K562 (cell line): ENCODE measurements at regions of chr17 and their contacts with region 1.

Region 1: DNA sequence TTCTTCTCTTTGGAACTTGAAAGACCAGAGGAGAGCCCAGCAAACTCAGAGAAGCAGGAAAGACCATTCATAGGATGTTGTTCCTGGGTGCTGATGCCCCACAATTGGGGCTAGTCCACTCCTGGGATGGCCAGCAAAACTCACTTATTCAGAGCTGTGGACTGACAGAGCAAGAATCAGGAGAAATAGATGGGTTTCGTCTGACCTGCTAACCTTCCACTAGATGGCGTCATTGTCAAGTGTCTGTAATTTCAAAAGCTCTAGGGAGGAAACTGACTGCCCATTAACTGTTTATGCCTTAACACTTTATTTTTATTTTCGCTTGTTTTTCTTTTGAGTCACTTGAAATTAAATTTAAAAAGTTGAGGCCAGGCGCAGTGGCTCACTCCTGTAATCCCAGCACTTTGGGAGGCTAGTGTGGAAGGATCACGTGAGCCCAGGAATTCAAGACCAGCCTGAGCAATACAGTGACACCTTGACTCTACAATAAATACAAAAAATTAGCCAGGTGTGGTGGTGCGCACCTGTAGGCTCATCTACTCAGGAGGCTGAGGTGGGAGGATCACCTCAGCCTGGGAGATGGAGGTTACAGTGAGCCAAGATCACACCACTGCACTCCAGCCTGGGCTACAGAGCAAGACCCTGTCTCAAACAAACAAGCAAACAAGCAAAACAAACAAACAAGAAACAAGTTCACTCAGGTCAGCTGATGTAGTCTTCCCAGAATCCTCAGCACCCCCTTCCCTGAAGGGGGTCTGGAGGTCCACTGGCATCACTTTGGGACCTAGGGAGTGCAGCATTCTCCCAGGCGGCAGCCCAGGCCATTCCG is 28.6 kb upstream of the MILR1 start:
- DNase-seq: peak; percentile 59 to 83 (median 66)
- ATAC-seq: peak; percentile 92
- H3K4me3 ChIP-seq: no peak overlapping the region
- H3K27ac ChIP-seq: no peak overlapping the region
- H3K4me1 ChIP-seq: peaks cover 0 to 9% of the 10 kb centered on the region in 2 experiments; a peak in 1 of 5 replicates
- H3K27me3 ChIP-seq: no peaks in the 10 kb centered on the region
- CTCF ChIP-seq: peak; percentile 75 to 90 (median 79)
- EP300 ChIP-seq: no peak
- POLR2A ChIP-seq: no peak
- RAD21 ChIP-seq: peak; percentile 94 to 95

Region 2: GRCh38 chr17:63904316-63904715 is 516.0 kb before region 1 on chr17:
- CTCF ChIA-PET with region 1: no interaction called
- POLR2A ChIA-PET with region 1: no interaction called
- in situ Hi-C with region 1: no loop called
- intact Hi-C with region 1: loop called (anchors 10 kb)
- DNase-seq: no peak
- ATAC-seq: no peak
- H3K4me3 ChIP-seq: no peak overlapping the region
- H3K27ac ChIP-seq: no peak overlapping the region
- H3K4me1 ChIP-seq: no peaks in the 10 kb centered on the region; a peak in 1 of 5 replicates
- H3K27me3 ChIP-seq: peaks cover 0 to 17% of the 10 kb centered on the region in 2 experiments; a peak in 4 of 5 replicates
- CTCF ChIP-seq: no peak
- EP300 ChIP-seq: no peak
- POLR2A ChIP-seq: no peak
- RAD21 ChIP-seq: no peak

Region 3: DNA sequence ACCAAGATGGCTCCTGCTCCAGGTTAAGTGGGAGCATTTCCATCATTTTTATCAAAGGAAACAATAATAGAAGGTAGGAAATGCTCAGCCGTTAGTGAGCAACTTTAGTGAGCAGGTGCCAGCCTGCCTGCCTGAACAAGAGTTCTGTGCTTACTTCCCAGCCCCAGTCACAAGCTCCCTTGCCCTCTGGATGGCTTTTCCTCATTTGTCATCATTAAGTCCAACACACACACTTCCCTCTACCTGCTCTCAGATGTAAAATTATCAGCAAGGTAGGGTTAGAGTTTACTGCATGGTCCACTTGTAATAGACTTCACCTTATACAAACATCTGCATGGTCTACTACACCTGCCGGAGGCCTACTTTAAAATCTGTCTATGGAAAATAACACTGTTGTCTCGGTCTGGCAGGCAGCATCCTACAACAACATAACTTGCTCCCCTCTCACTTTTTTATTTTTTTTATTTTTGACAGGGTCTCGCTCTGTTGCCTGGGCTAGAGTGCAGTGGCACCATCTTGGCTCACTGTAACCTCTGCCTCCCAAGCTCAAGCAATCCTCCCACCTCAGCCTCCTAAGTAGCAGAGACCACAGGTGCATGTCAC is 170.0 kb before region 1 on chr17:
- CTCF ChIA-PET with region 1: no interaction called
- POLR2A ChIA-PET with region 1: no interaction called
- in situ Hi-C with region 1: no loop called
- intact Hi-C with region 1: no loop called
- DNase-seq: no peak
- ATAC-seq: no peak
- H3K4me3 ChIP-seq: no peak overlapping the region
- H3K27ac ChIP-seq: no peak overlapping the region
- H3K4me1 ChIP-seq: peaks cover 3 to 5% of the 10 kb centered on the region in 2 experiments; a peak in 4 of 5 replicates
- H3K27me3 ChIP-seq: no peaks in the 10 kb centered on the region
- CTCF ChIP-seq: no peak
- EP300 ChIP-seq: no peak
- POLR2A ChIP-seq: no peak
- RAD21 ChIP-seq: no peak

Region 4: DNA sequence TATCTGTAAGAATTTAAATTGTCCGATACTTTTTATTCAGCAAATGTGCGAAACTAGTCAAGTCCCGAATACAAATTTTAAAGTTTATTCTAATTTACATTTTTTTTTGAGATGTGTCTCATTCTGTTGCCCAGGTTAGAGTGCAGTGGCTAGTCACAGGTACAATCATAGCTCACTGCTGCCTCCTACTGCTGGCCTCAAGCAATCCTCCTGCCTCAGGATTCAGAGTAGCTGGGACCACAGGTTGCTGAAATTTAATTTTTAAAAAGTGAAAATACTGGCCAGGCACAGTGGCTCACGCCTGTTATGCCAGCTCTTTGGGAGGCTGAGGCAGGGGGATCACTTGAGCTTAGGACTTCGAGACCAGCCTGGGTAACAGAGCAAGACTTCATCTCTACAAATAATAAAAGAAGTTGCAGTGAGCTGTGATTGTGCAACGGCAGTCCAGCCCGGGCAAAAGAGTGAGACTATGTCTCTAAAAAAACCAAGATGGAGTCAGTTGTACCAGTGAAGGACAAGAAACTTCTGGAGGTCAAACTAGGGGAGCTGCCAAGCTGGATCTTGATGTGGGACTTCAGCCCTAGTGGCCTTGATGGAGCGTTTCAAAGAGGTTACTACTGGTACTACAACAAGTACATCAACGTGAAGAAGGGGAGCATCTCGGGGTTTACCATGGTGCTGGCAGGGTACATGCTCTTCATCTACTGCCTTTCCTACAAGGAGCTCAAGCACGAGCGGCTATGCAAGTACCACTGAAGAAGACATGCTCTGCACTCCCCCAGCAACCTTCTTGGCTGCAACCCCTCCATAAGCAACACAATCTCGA is 70.9 kb after region 1 on chr17:
- CTCF ChIA-PET with region 1: interaction called, 16 read pairs
- POLR2A ChIA-PET with region 1: interaction called, 59 read pairs
- in situ Hi-C with region 1: loop called (anchors 5 kb)
- intact Hi-C with region 1: loop called (anchors 2 kb)
- DNase-seq: peak in 1 of 4 experiments; percentile 64
- ATAC-seq: peak; percentile 64
- H3K4me3 ChIP-seq: no peak overlapping the region
- H3K27ac ChIP-seq: no peak overlapping the region
- H3K4me1 ChIP-seq: peaks cover 0 to 4% of the 10 kb centered on the region in 2 experiments; a peak in 1 of 5 replicates
- H3K27me3 ChIP-seq: no peaks in the 10 kb centered on the region
- CTCF ChIP-seq: peak; percentile 54 to 65 (median 62)
- EP300 ChIP-seq: no peak
- POLR2A ChIP-seq: no peak
- RAD21 ChIP-seq: peak; percentile 39 to 64

Region 5: GRCh38 chr17:64599187-64599676 is 178.9 kb after region 1 on chr17:
- CTCF ChIA-PET with region 1: no interaction called
- POLR2A ChIA-PET with region 1: no interaction called
- in situ Hi-C with region 1: no loop called
- intact Hi-C with region 1: loop called (anchors 1 kb)
- DNase-seq: peak; percentile 30 to 88 (median 54)
- ATAC-seq: peak; percentile 98
- H3K4me3 ChIP-seq: peak overlapping the region; percentile 29
- H3K27ac ChIP-seq: peak overlapping the region; percentile 84
- H3K4me1 ChIP-seq: peaks cover 5 to 9% of the 10 kb centered on the region in 2 experiments; a peak in 4 of 5 replicates
- H3K27me3 ChIP-seq: no peaks in the 10 kb centered on the region
- CTCF ChIP-seq: no peak
- EP300 ChIP-seq: no peak
- POLR2A ChIP-seq: peak; percentile 82
- RAD21 ChIP-seq: no peak

Region 6: GRCh38 chr17:64653325-64653984 is 233.1 kb after region 1 on chr17:
- CTCF ChIA-PET with region 1: interaction called, 14 read pairs
- POLR2A ChIA-PET with region 1: no interaction called
- in situ Hi-C with region 1: loop called (anchors 5 kb)
- intact Hi-C with region 1: loop called (anchors 1 kb)
- DNase-seq: no peak
- ATAC-seq: peak; percentile 51
- H3K4me3 ChIP-seq: no peak overlapping the region
- H3K27ac ChIP-seq: 0 out of 3 replicates have a peak overlapping the region, but pooled peaks have one; percentile 9
- H3K4me1 ChIP-seq: peaks cover 2 to 13% of the 10 kb centered on the region in 2 experiments; a peak in 3 of 5 replicates
- H3K27me3 ChIP-seq: no peaks in the 10 kb centered on the region
- CTCF ChIP-seq: no peak
- EP300 ChIP-seq: no peak
- POLR2A ChIP-seq: no peak
- RAD21 ChIP-seq: no peak

Region 7: GRCh38 chr17:64968652-64969501 is 548.5 kb after region 1 on chr17:
- CTCF ChIA-PET with region 1: no interaction called
- POLR2A ChIA-PET with region 1: no interaction called
- in situ Hi-C with region 1: loop called (anchors 10 kb)
- intact Hi-C with region 1: loop called (anchors 5 kb)
- DNase-seq: no peak
- ATAC-seq: no peak
- H3K4me3 ChIP-seq: no peak overlapping the region
- H3K27ac ChIP-seq: no peak overlapping the region
- H3K4me1 ChIP-seq: peaks cover 6 to 11% of the 10 kb centered on the region in 2 experiments
- H3K27me3 ChIP-seq: no peaks in the 10 kb centered on the region
- CTCF ChIP-seq: no peak
- EP300 ChIP-seq: no peak
- POLR2A ChIP-seq: no peak
- RAD21 ChIP-seq: no peak